IMR-90 (cell line): ENCODE measurements at regions of chr11 and their contacts with region 1.

Region 1: DNA sequence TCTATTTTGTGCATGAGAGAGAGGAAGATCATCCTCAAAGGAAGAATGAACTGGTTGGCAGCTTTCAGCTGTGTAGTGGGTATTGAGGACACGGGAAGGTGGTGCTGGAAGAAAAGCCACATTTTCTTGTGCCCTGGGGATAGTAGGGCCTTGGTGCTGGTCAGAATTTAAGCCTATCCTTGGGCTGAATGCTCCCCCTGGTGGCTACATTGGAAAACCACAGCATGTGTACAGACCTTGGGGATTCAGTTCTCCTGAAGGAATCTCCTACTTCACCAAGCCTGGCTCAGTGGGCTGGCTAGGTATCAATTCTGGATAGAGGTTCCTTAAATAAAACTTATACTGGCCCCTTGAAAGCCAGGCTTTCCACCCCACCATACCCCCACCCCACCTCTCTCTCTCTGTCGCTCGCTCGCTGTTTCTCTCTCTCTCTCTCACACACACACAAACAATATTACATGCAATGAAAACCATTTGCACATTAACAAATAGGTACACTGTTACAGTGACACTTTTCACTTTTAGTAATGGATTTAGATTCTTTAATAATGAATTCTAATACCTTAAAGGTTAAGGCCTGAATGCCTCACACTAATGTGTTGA is 2.8 kb upstream of the OR51M1 start:
- DNase-seq: peak; percentile 77
- ATAC-seq: peak; percentile 100
- H3K4me3 ChIP-seq: no peak overlapping the region
- H3K27ac ChIP-seq: no peak overlapping the region
- H3K4me1 ChIP-seq: no peaks in the 10 kb centered on the region
- H3K27me3 ChIP-seq: no peaks in the 10 kb centered on the region
- CTCF ChIP-seq: peak; percentile 89
- POLR2A ChIP-seq: 0 out of 2 replicates have a peak, but pooled peaks have one; percentile 34
- RAD21 ChIP-seq: peak; percentile 98

Region 2: GRCh38 chr11:5004424-5005274 is 376.2 kb before region 1 on chr11:
- CTCF ChIA-PET with region 1: no interaction called
- POLR2A ChIA-PET with region 1: no interaction called
- dilution Hi-C with region 1: no loop called
- in situ Hi-C with region 1: no loop called
- intact Hi-C with region 1: loop called (anchors 5 kb)
- DNase-seq: peak; percentile 61
- ATAC-seq: peak; percentile 73
- H3K4me3 ChIP-seq: no peak overlapping the region
- H3K27ac ChIP-seq: no peak overlapping the region
- H3K4me1 ChIP-seq: no peaks in the 10 kb centered on the region
- H3K27me3 ChIP-seq: no peaks in the 10 kb centered on the region; the same call in 1 of the 2 replicates
- CTCF ChIP-seq: peak; percentile 78
- POLR2A ChIP-seq: no peak
- RAD21 ChIP-seq: peak; percentile 80

Region 3: GRCh38 chr11:5123802-5124521 is 256.9 kb before region 1 on chr11:
- CTCF ChIA-PET with region 1: no interaction called
- POLR2A ChIA-PET with region 1: interaction called, 4 read pairs
- dilution Hi-C with region 1: no loop called
- in situ Hi-C with region 1: loop called (anchors 5 kb)
- intact Hi-C with region 1: loop called (anchors 1 kb)
- DNase-seq: peak; percentile 76
- ATAC-seq: peak; percentile 100
- H3K4me3 ChIP-seq: no peak overlapping the region
- H3K27ac ChIP-seq: no peak overlapping the region
- H3K4me1 ChIP-seq: no peaks in the 10 kb centered on the region
- H3K27me3 ChIP-seq: no peaks in the 10 kb centered on the region
- CTCF ChIP-seq: peak; percentile 94
- POLR2A ChIP-seq: no peak
- RAD21 ChIP-seq: peak; percentile 91

Region 4: GRCh38 chr11:5204787-5205186 is 176.1 kb before region 1 on chr11:
- CTCF ChIA-PET with region 1: interaction called, 3 read pairs
- POLR2A ChIA-PET with region 1: no interaction called
- dilution Hi-C with region 1: no loop called
- in situ Hi-C with region 1: no loop called
- intact Hi-C with region 1: loop called (anchors 2 kb)
- DNase-seq: peak; percentile 90
- ATAC-seq: peak; percentile 94
- H3K4me3 ChIP-seq: no peak overlapping the region
- H3K27ac ChIP-seq: no peak overlapping the region
- H3K4me1 ChIP-seq: peaks cover 4% of the 10 kb centered on the region; the same call in 1 of the 2 replicates
- H3K27me3 ChIP-seq: no peaks in the 10 kb centered on the region
- CTCF ChIP-seq: peak; percentile 82
- POLR2A ChIP-seq: no peak
- RAD21 ChIP-seq: peak; percentile 91